Activated CD8-positive, alpha-beta T cell treated with anti-CD3 and anti-CD28 coated beads for 36 hours (primary cell): ENCODE measurements at regions of chr1 and their contacts with region 1.

Region 1: DNA sequence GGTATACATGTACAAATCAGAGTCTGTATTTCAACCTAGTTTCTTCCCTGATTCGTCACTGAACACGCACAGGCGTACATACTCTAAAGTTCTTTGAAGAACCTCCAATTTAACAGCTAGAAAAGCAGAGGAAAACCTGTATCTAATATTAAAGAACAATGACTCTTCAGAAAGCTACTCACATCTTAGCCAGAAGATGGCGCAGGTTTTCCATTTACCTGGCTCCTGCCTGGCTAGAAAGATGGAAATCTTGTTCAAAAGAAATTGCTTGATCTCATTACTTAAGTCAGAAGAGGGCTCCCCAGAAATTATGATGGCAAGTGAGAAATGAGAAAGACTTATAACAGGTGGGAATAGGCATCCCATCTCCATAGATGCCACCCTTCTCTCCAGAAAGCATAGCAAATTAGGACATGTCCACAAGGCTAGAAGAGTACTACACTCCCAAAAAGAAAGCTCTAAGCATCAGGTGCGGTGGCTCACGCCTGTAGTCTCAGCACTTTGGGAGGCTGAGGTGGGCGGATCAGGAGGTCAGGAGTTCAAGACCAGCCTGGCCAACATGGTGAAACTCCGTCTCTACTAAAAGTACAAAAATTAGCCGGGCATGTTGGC is 19.0 kb upstream of the L1TD1 start:
- DNase-seq: peak; percentile 55
- ATAC-seq: peak; percentile 42
- H3K4me3 Mint-ChIP-seq: no peak overlapping the region
- H3K27ac Mint-ChIP-seq: no peak overlapping the region
- H3K4me1 Mint-ChIP-seq: no peaks in the 10 kb centered on the region
- H3K27me3 Mint-ChIP-seq: peaks cover 4% of the 10 kb centered on the region
- CTCF ChIP-seq: peak; percentile 88

Region 2: DNA sequence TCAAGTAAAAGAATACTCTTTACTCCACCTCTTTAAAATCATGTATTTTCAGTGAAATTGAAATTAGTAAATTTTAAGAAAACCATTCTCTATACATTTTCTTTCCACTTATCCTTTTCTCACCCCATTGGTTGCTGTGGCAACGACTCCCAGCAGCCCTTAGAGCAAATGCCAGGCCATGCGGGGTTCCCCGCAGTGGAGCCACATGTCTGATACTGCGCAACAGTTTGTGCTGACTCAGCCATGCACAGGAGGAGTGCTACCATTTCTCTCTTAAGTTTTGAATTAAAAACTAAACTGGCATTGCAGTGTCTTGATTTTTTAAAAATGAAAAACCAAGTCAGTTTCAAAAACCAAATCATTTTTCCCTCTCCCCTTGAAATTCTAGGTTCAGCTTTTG is 195.1 kb before region 1 on chr1:
- CTCF ChIA-PET with region 1: no interaction called
- POLR2A ChIA-PET with region 1: no interaction called
- intact Hi-C with region 1: no loop called
- DNase-seq: peak; percentile 55
- ATAC-seq: peak; percentile 58
- H3K4me3 Mint-ChIP-seq: no peak overlapping the region
- H3K27ac Mint-ChIP-seq: no peak overlapping the region
- H3K4me1 Mint-ChIP-seq: peaks cover 17% of the 10 kb centered on the region
- H3K27me3 Mint-ChIP-seq: no peaks in the 10 kb centered on the region
- CTCF ChIP-seq: no peak

Region 3: GRCh38 chr1:62076286-62076685 is 99.4 kb before region 1 on chr1:
- CTCF ChIA-PET with region 1: no interaction called
- POLR2A ChIA-PET with region 1: no interaction called
- intact Hi-C with region 1: no loop called
- DNase-seq: no peak
- ATAC-seq: no peak
- H3K4me3 Mint-ChIP-seq: no peak overlapping the region
- H3K27ac Mint-ChIP-seq: no peak overlapping the region
- H3K4me1 Mint-ChIP-seq: no peaks in the 10 kb centered on the region
- H3K27me3 Mint-ChIP-seq: no peaks in the 10 kb centered on the region
- CTCF ChIP-seq: no peak

Region 4: GRCh38 chr1:62407405-62408009 is 231.8 kb after region 1 on chr1:
- CTCF ChIA-PET with region 1: interaction called, 105 read pairs
- POLR2A ChIA-PET with region 1: no interaction called
- intact Hi-C with region 1: loop called (anchors 1 kb)
- DNase-seq: peak; percentile 12
- ATAC-seq: peak; percentile 55
- H3K4me3 Mint-ChIP-seq: no peak overlapping the region
- H3K27ac Mint-ChIP-seq: no peak overlapping the region
- H3K4me1 Mint-ChIP-seq: no peaks in the 10 kb centered on the region
- H3K27me3 Mint-ChIP-seq: no peaks in the 10 kb centered on the region
- CTCF ChIP-seq: peak; percentile 88